ENCODE measurements at regions of chr3 and their contacts with region 1.

Region 1: DNA sequence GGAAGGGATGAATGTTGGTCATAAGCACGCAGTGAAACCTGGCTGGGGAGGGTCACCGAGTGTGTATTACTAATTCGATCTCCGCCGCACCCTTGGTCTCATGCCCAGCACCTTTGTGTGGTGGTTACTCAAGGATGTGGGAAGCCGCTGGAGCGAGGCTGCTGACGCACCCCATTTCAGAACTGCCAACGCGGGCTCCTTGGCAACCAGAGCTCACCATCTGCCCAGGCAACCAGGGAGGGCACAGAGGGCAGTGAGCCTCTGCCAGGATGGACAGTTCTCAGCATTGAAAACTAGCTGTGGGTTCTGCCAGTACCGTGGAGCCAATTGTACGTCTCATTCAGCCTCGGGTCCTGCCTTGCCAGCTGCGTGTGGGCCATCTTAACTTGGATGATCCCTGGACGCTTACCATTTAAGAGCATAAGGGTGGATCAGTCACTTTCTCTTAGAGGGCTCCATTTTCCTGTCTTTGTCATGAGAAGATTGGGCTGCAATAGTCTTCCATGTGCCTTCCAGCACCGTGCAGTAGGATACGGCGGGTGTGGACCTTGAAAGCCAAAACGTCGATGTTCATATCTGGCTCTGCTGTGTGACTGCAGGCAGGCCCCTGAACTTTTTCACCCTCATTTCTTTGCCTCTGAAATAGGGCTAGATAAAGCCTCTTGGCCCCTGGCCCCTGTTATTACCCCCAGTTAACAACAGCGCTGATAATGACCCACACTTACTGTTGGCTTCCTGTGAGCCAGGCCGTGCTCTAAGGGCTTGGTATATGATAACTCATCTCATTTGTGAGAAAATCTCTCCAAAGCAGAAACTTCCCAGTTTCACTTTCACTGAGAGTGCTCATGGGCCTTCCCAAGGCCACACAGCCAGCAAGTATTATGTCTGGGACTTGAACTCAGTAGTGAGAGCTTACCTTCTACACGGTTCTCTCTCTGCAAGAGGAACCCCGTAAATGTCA is 238.8 kb downstream of the OPA1 start:
- DNase-seq: peak; percentile 100
- H3K4me3 Mint-ChIP-seq: peak overlapping the region; percentile 61
- H3K27ac Mint-ChIP-seq: peak overlapping the region; percentile 100
- H3K4me1 Mint-ChIP-seq: peaks cover 56% of the 10 kb centered on the region
- H3K27me3 Mint-ChIP-seq: no peaks in the 10 kb centered on the region
- CTCF ChIP-seq: no peak

Region 2: GRCh38 chr3:193637831-193638230 is 193.9 kb before region 1 on chr3:
- CTCF ChIA-PET with region 1: no interaction called
- POLR2A ChIA-PET with region 1: no interaction called
- intact Hi-C with region 1: no loop called
- DNase-seq: peak; percentile 18
- H3K4me3 Mint-ChIP-seq: no peak overlapping the region
- H3K27ac Mint-ChIP-seq: no peak overlapping the region
- H3K4me1 Mint-ChIP-seq: no peaks in the 10 kb centered on the region
- H3K27me3 Mint-ChIP-seq: no peaks in the 10 kb centered on the region
- CTCF ChIP-seq: no peak

Region 3: DNA sequence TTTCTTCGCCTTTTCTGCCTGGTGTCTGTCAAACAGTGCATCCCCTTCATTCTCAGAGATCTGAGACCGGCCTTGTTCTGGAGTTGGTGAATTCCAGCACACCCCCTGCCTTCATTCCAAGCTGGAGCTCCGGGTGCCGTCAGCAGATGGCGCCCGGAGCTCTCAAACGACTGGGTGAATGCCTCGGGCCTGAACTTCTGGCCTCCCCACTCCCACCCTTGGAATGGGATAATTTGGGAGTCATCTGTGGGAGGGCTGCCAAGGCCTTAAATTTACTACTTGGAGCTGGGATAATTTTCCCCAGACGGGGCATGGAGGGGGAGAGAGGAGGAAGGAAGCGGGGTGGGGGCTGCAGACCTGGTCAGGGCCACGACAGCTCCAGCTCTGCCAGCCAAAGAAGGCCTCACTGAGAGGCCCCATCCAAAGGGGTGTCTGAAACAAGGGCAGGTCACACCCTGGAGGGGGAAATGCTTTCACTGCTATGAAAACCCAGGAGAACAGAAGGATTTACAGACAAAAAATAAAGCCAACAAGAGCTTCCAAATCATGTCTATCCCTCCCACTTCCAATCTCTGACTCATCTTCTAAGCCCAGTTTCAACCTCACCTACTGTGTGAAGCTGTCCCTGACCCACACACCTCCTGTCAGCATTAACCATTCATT is 50.8 kb before region 1 on chr3:
- CTCF ChIA-PET with region 1: interaction called, 8 read pairs
- POLR2A ChIA-PET with region 1: interaction called, 31 read pairs
- intact Hi-C with region 1: loop called (anchors 1 kb)
- DNase-seq: peak; percentile 93
- H3K4me3 Mint-ChIP-seq: no peak overlapping the region
- H3K27ac Mint-ChIP-seq: peak overlapping the region; percentile 88
- H3K4me1 Mint-ChIP-seq: peaks cover 35% of the 10 kb centered on the region
- H3K27me3 Mint-ChIP-seq: peaks cover 10% of the 10 kb centered on the region
- CTCF ChIP-seq: peak; percentile 93

Region 4: GRCh38 chr3:193857996-193858395 is 26.2 kb after region 1 on chr3:
- CTCF ChIA-PET with region 1: interaction called, 3 read pairs
- POLR2A ChIA-PET with region 1: interaction called, 14 read pairs
- intact Hi-C with region 1: loop called (anchors 1 kb)
- DNase-seq: peak; percentile 96
- H3K4me3 Mint-ChIP-seq: no peak overlapping the region
- H3K27ac Mint-ChIP-seq: no peak overlapping the region
- H3K4me1 Mint-ChIP-seq: peaks cover 26% of the 10 kb centered on the region
- H3K27me3 Mint-ChIP-seq: no peaks in the 10 kb centered on the region
- CTCF ChIP-seq: no peak

Region 5: GRCh38 chr3:193910886-193911738 is 79.3 kb after region 1 on chr3:
- CTCF ChIA-PET with region 1: no interaction called
- POLR2A ChIA-PET with region 1: no interaction called
- intact Hi-C with region 1: no loop called
- DNase-seq: no peak
- H3K4me3 Mint-ChIP-seq: no peak overlapping the region
- H3K27ac Mint-ChIP-seq: no peak overlapping the region
- H3K4me1 Mint-ChIP-seq: no peaks in the 10 kb centered on the region
- H3K27me3 Mint-ChIP-seq: no peaks in the 10 kb centered on the region
- CTCF ChIP-seq: no peak

Region 6: GRCh38 chr3:193951859-193952258 is 120.1 kb after region 1 on chr3:
- CTCF ChIA-PET with region 1: no interaction called
- POLR2A ChIA-PET with region 1: interaction called, 10 read pairs
- intact Hi-C with region 1: no loop called
- DNase-seq: peak; percentile 72
- H3K4me3 Mint-ChIP-seq: no peak overlapping the region
- H3K27ac Mint-ChIP-seq: peak overlapping the region; percentile 81
- H3K4me1 Mint-ChIP-seq: peaks cover 22% of the 10 kb centered on the region
- H3K27me3 Mint-ChIP-seq: no peaks in the 10 kb centered on the region
- CTCF ChIP-seq: no peak

Region 7: DNA sequence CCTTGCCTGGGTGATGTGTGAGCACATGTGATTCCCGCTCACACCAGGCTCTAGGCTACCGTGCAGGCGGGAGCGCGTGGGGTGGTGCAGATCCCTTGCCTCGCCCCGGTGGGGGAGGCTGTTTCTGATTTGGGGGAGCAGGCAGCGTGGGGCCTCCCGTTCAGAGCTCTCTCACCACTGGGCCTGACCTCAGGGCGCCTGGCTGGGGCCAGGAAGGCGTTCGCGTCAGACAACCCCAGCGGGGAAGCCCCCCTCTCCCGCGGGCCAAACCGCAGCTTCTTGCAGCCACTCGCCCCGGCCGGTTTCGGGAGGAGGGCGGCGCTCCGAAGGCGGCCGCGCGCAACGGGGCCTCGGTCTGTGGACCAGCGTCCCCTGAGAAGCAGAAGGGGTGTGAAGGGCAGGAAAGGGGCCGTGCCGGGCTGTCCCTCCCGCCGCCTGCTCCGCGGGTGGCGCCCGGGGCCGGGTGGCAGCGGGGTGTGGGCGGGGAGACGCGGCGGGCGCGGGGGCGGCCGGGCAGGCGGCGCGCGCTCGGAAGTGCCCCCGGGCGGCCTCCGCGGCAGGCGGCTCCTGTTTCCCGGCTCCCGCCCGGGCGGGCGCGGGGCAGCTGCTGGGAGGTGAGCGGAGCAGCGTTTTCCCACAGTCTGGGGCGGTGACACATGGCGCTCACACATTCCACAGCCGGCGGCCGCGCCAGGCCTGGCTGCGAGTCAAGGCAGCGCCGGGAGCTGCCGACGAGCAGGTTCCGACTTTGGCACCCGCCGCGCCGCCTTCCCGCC is 239.0 kb after region 1 on chr3:
- CTCF ChIA-PET with region 1: no interaction called
- POLR2A ChIA-PET with region 1: interaction called, 7 read pairs
- intact Hi-C with region 1: loop called (anchors 5 kb)
- DNase-seq: peak; percentile 96
- H3K4me3 Mint-ChIP-seq: peak overlapping the region; percentile 67
- H3K27ac Mint-ChIP-seq: no peak overlapping the region
- H3K4me1 Mint-ChIP-seq: peaks cover 17% of the 10 kb centered on the region
- H3K27me3 Mint-ChIP-seq: no peaks in the 10 kb centered on the region
- CTCF ChIP-seq: no peak

Region 8: DNA sequence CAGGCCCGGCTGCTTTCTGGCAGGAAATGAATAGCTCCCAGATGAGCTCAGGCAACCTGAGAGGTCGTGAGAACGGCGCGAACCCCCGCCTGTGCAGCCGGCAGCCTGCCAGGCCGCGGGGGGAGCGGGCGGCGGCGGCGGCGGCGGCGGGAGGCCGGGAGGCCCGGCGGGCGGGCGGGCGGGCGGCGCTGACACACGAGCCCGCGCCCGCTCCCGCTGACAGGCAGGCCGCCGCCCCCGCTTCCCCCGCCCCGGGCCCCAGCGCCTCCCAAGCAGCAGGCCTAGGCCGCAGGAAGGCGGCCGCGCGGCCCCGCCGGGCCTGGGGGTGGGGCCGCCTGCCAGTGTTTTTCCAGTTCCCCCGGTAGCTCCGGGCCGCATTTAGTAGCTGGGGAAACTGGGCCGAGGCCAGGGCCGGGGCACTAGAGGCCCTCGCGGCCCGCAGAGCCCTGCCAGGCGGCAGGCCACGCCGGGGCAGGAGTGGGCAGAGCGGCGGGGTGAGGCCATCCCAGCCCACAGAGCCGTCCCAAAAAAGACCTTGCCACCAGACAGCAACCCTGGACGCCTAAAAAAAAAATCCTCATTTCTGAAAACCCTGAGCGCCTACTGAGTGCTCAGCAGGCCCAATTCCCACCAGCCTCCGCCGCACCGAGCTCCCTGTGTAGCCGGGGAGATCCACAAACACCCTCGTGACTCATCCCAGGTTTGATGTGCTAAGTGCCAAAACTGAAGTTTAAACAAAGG is 309.8 kb after region 1 on chr3:
- CTCF ChIA-PET with region 1: interaction called, 7 read pairs
- POLR2A ChIA-PET with region 1: interaction called, 57 read pairs
- intact Hi-C with region 1: loop called (anchors 1 kb)
- DNase-seq: peak; percentile 97
- H3K4me3 Mint-ChIP-seq: peak overlapping the region; percentile 59
- H3K27ac Mint-ChIP-seq: peak overlapping the region; percentile 94
- H3K4me1 Mint-ChIP-seq: peaks cover 26% of the 10 kb centered on the region
- H3K27me3 Mint-ChIP-seq: no peaks in the 10 kb centered on the region
- CTCF ChIP-seq: no peak